Transverse colon (tissue), 4 donors: ENCODE measurements at regions of chr6 and their contacts with region 1.

Region 1: GRCh38 chr6:121413879-121414278 is 21.6 kb upstream of the GJA1 start:
- DNase-seq: no peak
- H3K4me3 ChIP-seq: no peak overlapping the region
- H3K27ac ChIP-seq: no peak overlapping the region
- H3K4me1 ChIP-seq: no peaks in the 10 kb centered on the region
- H3K27me3 ChIP-seq: no peaks in the 10 kb centered on the region
- CTCF ChIP-seq: no peak
- EP300 ChIP-seq: no peak
- POLR2A ChIP-seq: no peak

Region 2: GRCh38 chr6:121334299-121335086 is 79.4 kb before region 1 on chr6 and contains the start of gene TBC1D32:
- in situ Hi-C with region 1: no loop called
- intact Hi-C with region 1: no loop called
- DNase-seq: peak; percentile 93
- H3K4me3 ChIP-seq: peak within 1 kb of the TSS; percentile 22 to 80 (median 62)
- H3K27ac ChIP-seq: peak within 1 kb of the TSS; percentile 85 to 95 (median 90)
- H3K4me1 ChIP-seq: peaks cover 0 to 9% (median 1%) of the 10 kb centered on the region in 4 donors
- H3K27me3 ChIP-seq: no peaks in the 10 kb centered on the region
- CTCF ChIP-seq: peak in 1 of 5 experiments; percentile 36
- EP300 ChIP-seq: no peak
- POLR2A ChIP-seq: peak; percentile 57
- total RNA-seq, gene TBC1D32: 13.4 to 49.6 (median 22.6) TPM

Region 3: GRCh38 chr6:122184401-122184827 is 770.5 kb after region 1 on chr6:
- in situ Hi-C with region 1: no loop called
- intact Hi-C with region 1: loop called (anchors 10 kb)
- DNase-seq: no peak
- H3K4me3 ChIP-seq: no peak overlapping the region
- H3K27ac ChIP-seq: no peak overlapping the region
- H3K4me1 ChIP-seq: no peaks in the 10 kb centered on the region
- H3K27me3 ChIP-seq: no peaks in the 10 kb centered on the region
- CTCF ChIP-seq: peak in 3 of 5 experiments; percentile 8 to 24 (median 9)
- EP300 ChIP-seq: no peak
- POLR2A ChIP-seq: no peak